Naive thymus-derived CD4-positive, alpha-beta T cell (primary cell): ENCODE measurements at regions of chr9 and their contacts with region 1.

Region 1: GRCh38 chr9:35102926-35103659 is at the start of gene STOML2:
- DNase-seq: peak; percentile 72 to 95 (median 91)
- ATAC-seq: peak; percentile 98
- H3K4me3 ChIP-seq: peak within 1 kb of the TSS; percentile 92
- H3K4me3 Mint-ChIP-seq: peak within 1 kb of the TSS; percentile 88 to 98 (median 92)
- H3K27ac ChIP-seq: peak within 1 kb of the TSS; percentile 81
- H3K27ac Mint-ChIP-seq: peak within 1 kb of the TSS; percentile 92 to 99 (median 96)
- H3K4me1 ChIP-seq: peaks cover 12 to 18% of the 10 kb centered on the region in 2 donors
- H3K4me1 Mint-ChIP-seq: peaks cover 18 to 36% (median 33%) of the 10 kb centered on the region in 7 donors
- H3K27me3 ChIP-seq: no peaks in the 10 kb centered on the region
- H3K27me3 Mint-ChIP-seq: no peaks in the 10 kb centered on the region
- total RNA-seq, gene STOML2: 34.7 to 126 (median 44.9) TPM

Region 2: GRCh38 chr9:35071814-35072460 is 31.2 kb before region 1 on chr9:
- CTCF ChIA-PET with region 1: no interaction called
- POLR2A ChIA-PET with region 1: interaction called, 88 read pairs
- intact Hi-C with region 1: loop called in 1 of 2 experiments (anchors 1 kb)
- DNase-seq: peak in 8 of 9 donors; percentile 67 to 83 (median 71)
- ATAC-seq: peak; percentile 70
- H3K4me3 ChIP-seq: peak overlapping the region; percentile 53
- H3K4me3 Mint-ChIP-seq: peak overlapping the region; percentile 74 to 95 (median 88)
- H3K27ac ChIP-seq: peak overlapping the region; percentile 93
- H3K27ac Mint-ChIP-seq: peak overlapping the region; percentile 81 to 96 (median 91)
- H3K4me1 ChIP-seq: peaks cover 22 to 43% of the 10 kb centered on the region in 2 donors
- H3K4me1 Mint-ChIP-seq: peaks cover 34 to 66% (median 53%) of the 10 kb centered on the region in 7 donors
- H3K27me3 ChIP-seq: no peaks in the 10 kb centered on the region
- H3K27me3 Mint-ChIP-seq: peaks cover 0 to 3% (median 0%) of the 10 kb centered on the region in 5 donors

Region 3: GRCh38 chr9:35079426-35080341 is 23.4 kb before region 1 on chr9 and contains the start of gene FANCG:
- CTCF ChIA-PET with region 1: interaction called, 19 read pairs
- POLR2A ChIA-PET with region 1: interaction called, 88 read pairs
- intact Hi-C with region 1: loop called in 1 of 2 experiments (anchors 1 kb)
- DNase-seq: peak; percentile 60 to 87 (median 73)
- ATAC-seq: peak; percentile 98
- H3K4me3 ChIP-seq: peak within 1 kb of the TSS; percentile 84
- H3K4me3 Mint-ChIP-seq: peak within 1 kb of the TSS; percentile 84 to 98 (median 94)
- H3K27ac ChIP-seq: peak within 1 kb of the TSS; percentile 74
- H3K27ac Mint-ChIP-seq: peak within 1 kb of the TSS; percentile 76 to 99 (median 91)
- H3K4me1 ChIP-seq: peaks cover 8 to 10% of the 10 kb centered on the region in 2 donors
- H3K4me1 Mint-ChIP-seq: peaks cover 13 to 38% (median 24%) of the 10 kb centered on the region in 7 donors
- H3K27me3 ChIP-seq: no peaks in the 10 kb centered on the region
- H3K27me3 Mint-ChIP-seq: no peaks in the 10 kb centered on the region
- total RNA-seq, gene FANCG: 19.6 to 84.9 (median 26.7) TPM